ENCODE measurements at regions of chr2 and their contacts with region 1.

Region 1: GRCh38 chr2:30208452-30208851 is 22.9 kb upstream of the LBH start:
- DNase-seq: peak; percentile 73
- H3K4me3 Mint-ChIP-seq: no peak overlapping the region
- H3K27ac Mint-ChIP-seq: no peak overlapping the region
- H3K4me1 Mint-ChIP-seq: peaks cover 6% of the 10 kb centered on the region
- H3K27me3 Mint-ChIP-seq: no peaks in the 10 kb centered on the region
- CTCF ChIP-seq: peak; percentile 90

Region 2: DNA sequence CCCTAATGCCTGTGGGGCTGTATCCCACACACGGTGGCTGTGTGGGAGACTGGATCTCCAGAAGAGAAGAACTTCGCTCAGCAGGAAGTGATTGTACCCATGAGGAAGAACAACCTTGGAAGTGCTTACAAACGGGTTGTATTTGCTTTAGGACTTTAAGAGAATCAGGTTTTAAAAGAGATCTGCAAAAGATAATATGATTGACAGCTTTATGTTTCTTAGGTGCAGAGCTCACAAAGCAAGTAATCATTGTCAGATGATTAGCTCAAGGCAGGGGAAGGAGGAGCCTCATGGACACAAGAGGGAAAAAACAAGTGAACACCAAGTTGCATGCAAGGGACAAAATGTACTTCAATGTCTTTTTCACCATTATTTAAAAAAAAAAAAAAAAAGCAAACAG is 241.1 kb before region 1 on chr2:
- CTCF ChIA-PET with region 1: no interaction called
- POLR2A ChIA-PET with region 1: no interaction called
- intact Hi-C with region 1: no loop called
- DNase-seq: no peak
- H3K4me3 Mint-ChIP-seq: no peak overlapping the region
- H3K27ac Mint-ChIP-seq: no peak overlapping the region
- H3K4me1 Mint-ChIP-seq: peaks cover 18% of the 10 kb centered on the region
- H3K27me3 Mint-ChIP-seq: peaks cover 1% of the 10 kb centered on the region
- CTCF ChIP-seq: no peak

Region 3: DNA sequence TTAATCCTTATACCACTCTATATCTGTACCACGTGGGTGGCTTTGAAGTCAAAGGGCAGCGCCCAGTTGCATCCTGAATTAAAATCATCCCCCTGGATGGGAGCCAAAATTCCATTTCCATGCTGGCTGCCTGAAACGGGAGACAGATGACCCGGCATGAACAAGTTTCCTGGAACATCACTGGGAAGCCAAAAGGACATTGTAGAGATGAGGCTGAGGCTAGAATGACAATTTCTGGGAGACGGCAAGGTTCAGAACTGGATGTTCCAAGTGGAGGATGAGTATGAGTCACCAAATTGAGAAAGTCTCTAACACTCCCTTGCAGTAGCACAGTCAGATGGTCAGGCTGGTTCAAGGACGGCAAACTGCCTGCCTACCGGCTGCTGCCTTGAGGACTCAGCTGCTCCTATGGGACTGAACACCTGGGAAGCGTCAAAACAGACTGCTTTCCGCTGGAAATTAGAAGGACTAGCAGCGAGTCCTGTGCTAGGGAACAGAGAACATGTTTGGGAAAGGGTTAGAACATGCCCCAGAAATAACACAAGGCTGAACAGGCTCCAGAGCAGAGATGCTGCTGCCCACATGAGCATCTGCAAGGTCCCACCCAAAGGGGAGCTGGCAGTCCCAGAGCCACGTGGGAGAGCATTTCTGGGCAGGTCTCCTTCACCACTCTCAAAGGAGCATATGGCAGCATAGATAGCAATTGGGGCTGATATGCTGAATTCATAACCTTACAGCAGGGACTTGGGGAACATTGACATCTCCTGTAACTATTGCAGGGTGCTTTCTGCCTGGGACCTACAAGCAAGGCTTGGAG is 29.6 kb before region 1 on chr2:
- CTCF ChIA-PET with region 1: interaction called, 26 read pairs
- POLR2A ChIA-PET with region 1: no interaction called
- intact Hi-C with region 1: no loop called
- DNase-seq: peak; percentile 96
- H3K4me3 Mint-ChIP-seq: no peak overlapping the region
- H3K27ac Mint-ChIP-seq: peak overlapping the region; percentile 87
- H3K4me1 Mint-ChIP-seq: peaks cover 28% of the 10 kb centered on the region
- H3K27me3 Mint-ChIP-seq: no peaks in the 10 kb centered on the region
- CTCF ChIP-seq: no peak

Region 4: DNA sequence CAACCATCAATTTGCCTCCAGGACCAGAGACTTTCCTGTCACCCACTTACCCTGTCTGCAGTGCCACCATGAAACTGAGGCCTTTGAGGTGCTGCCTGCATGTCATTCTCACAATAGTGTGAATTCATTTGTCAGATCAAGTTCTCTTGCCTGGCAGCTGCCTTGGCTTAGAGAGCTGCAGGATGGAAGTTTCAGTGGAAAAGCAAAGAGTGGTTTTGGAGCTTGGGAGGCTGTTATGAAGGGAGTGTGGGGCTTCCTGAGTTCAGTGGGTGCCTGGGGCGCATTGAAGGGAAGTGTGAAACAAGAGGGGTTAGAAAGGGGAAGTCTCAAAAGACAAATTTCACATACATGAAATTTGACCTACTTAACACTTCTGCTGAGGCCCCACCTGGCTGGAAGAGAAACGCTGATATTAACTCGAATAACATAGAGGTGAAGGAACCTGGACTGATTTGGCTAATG is 15.0 kb after region 1 on chr2:
- CTCF ChIA-PET with region 1: interaction called, 33 read pairs
- POLR2A ChIA-PET with region 1: no interaction called
- intact Hi-C with region 1: no loop called
- DNase-seq: no peak
- H3K4me3 Mint-ChIP-seq: no peak overlapping the region
- H3K27ac Mint-ChIP-seq: no peak overlapping the region
- H3K4me1 Mint-ChIP-seq: peaks cover 8% of the 10 kb centered on the region
- H3K27me3 Mint-ChIP-seq: no peaks in the 10 kb centered on the region
- CTCF ChIP-seq: no peak

Region 5: DNA sequence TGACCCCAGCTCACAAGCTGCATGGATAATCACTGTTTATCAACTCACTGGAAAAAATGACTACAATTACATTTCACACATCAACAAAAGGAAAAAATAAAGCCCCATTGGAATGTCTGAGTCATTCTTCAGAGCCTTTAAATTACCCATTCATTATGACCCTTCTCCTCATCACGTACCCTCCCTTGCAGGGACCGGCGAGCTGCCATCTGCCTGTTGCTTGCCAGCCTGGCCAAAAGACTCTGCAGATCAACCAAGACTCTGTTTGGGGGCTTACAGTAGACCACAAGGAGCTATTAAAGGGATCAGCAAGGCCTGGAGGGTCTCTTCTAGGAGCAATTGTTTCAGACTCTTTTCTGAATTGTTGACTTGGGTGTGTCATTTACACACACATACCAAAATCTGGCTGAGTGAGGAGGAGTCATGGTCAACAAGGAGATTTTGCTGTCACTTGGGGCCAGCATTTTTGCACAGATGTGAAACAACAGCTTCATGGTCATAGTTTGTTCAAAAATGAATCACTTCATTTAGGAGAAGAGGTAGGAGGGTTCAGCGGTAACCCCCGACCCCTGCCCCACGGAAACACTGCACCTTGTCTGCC is 64.9 kb after region 1 on chr2:
- CTCF ChIA-PET with region 1: interaction called, 3 read pairs
- POLR2A ChIA-PET with region 1: no interaction called
- intact Hi-C with region 1: loop called (anchors 1 kb)
- DNase-seq: peak; percentile 57
- H3K4me3 Mint-ChIP-seq: no peak overlapping the region
- H3K27ac Mint-ChIP-seq: peak overlapping the region; percentile 19
- H3K4me1 Mint-ChIP-seq: peaks cover 28% of the 10 kb centered on the region
- H3K27me3 Mint-ChIP-seq: no peaks in the 10 kb centered on the region
- CTCF ChIP-seq: no peak

Region 6: DNA sequence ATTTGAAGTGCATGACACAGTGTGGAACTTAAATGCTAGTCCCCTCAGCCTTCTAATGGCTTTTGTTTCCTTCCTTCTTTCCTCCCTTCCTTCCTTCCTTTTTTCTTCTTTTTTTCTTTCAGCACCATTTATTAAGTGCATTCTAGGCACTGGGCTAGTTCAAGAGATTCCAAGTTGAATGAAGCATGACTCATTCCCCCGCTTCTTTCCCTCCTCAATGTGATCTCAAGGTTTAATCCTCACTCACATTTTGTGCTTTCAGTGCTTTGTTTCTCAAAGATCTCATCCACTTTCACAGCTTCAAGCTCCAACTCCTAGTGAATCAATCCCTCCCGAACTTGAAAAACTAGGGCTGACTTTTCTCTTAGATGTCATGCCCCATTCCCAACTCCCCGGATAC is 113.0 kb after region 1 on chr2:
- CTCF ChIA-PET with region 1: no interaction called
- POLR2A ChIA-PET with region 1: no interaction called
- intact Hi-C with region 1: no loop called
- DNase-seq: no peak
- H3K4me3 Mint-ChIP-seq: no peak overlapping the region
- H3K27ac Mint-ChIP-seq: no peak overlapping the region
- H3K4me1 Mint-ChIP-seq: no peaks in the 10 kb centered on the region
- H3K27me3 Mint-ChIP-seq: peaks cover 12% of the 10 kb centered on the region
- CTCF ChIP-seq: no peak

Region 7: DNA sequence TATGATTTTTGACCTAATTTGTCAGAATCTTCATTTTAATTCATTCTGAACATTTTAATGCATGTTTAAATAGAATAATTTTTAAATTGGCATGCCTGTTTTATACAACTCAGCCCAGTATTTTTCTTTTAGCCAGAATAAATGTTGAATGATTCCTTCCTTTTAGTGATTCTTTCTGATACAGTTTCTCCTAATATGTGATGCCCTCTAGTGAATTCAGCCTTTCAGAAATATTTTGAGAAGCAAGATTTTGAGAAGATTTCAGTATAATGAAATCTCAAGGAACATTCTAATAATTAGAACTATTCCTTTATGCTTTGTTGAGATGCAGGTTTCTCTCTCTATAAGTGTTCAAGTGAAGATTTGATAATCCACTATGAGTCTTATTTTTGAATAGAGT is 267.1 kb after region 1 on chr2:
- CTCF ChIA-PET with region 1: interaction called, 14 read pairs
- POLR2A ChIA-PET with region 1: no interaction called
- intact Hi-C with region 1: loop called (anchors 1 kb)
- DNase-seq: no peak
- H3K4me3 Mint-ChIP-seq: no peak overlapping the region
- H3K27ac Mint-ChIP-seq: no peak overlapping the region
- H3K4me1 Mint-ChIP-seq: peaks cover 9% of the 10 kb centered on the region
- H3K27me3 Mint-ChIP-seq: no peaks in the 10 kb centered on the region
- CTCF ChIP-seq: no peak

Region 8: DNA sequence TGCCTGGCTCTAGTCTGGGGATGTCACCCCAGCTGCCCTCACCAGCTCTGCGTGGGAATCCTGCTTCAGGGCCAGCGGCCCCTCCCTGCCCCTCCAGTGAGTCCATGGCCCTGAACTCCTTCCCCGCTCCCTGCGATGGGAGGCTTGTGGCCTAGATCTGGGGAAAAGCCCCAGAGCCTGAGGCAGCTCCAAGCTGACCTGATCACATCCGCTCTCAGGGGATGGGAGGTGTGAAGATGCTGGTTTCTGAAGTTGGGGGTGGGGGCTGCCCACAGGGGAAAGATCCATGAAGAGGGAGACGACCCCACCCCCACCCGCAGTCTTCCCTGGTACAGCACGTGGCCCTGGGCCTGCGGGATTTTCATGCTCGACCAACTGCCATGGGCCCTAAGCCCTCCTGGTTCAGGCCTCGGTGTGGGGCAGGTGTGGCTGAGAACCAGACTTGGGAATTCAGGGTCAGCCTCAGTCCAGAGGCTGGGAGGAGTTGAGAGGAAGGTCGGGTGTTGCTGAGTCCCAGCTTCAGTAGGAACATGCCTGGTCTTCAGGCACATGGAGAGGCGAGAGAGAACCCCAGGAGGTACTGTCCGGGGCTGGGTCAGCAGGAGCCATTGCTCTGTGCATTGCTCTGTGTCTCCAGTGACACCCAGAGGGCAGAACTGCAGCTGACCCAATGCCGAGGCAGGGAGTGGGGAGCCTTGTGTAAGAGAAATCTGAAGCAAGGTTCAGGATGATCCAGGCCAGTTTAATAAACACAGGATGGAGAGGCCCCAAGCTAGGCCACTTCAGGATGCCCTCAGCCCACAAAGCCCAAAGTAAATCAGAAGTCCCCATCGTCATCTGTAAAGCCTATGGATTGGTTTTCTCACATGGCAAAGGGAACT is 483.7 kb after region 1 on chr2:
- CTCF ChIA-PET with region 1: interaction called, 36 read pairs
- POLR2A ChIA-PET with region 1: no interaction called
- intact Hi-C with region 1: no loop called
- DNase-seq: peak; percentile 29
- H3K4me3 Mint-ChIP-seq: no peak overlapping the region
- H3K27ac Mint-ChIP-seq: no peak overlapping the region
- H3K4me1 Mint-ChIP-seq: no peaks in the 10 kb centered on the region
- H3K27me3 Mint-ChIP-seq: peaks cover 17% of the 10 kb centered on the region
- CTCF ChIP-seq: peak; percentile 36

Measured in MCF 10A (cell line).